CD8-positive, alpha-beta T cell (primary cell): ENCODE measurements at regions of chr1 and their contacts with region 1.

Region 1: DNA sequence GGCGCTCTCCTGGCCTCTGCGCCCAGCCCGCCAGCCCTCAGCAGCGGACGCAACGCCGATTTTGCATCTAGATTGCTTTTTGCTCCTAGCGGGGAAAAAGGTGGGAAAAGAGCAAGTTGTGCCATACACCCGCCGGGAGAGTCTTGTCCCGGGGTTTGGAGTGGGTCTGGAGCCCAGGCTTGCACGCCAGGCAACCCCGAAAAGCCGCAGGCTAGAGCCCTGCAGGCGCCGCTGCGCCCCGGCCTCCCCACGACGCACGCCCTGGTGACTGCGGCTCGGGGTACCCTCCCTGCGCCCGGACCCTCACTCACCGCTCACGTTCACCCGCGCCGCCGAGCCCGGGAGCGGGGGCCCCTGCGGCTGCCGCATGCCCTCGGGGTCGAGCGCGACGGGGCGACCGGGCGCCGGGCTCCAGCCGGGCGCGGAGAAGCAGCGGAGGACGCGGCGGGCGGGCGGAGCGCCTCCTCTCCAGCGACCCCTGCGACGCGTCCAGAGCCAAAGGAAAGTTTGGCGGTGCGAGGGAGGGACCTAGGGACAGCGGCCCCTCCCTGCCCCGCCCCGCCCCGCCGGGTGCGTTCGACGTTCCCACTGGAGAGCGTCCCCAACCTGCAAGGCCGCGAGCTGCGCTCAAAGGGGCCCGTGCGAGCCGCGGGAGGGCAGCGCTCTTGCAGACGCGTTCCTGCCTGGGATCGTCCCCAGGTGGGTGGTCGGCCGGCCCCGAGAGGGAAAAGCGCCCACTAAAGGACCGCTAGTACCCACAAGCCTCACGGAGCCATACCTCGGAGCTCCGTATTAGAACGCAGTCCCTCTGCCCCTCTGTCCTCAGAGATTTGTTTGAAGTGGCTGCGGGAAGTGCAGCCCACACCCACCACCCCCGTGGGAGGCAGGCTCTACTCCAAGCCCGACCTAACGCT is at the start of gene LPAR3:
- DNase-seq: peak in 4 of 9 experiments; percentile 39 to 55 (median 41)
- ATAC-seq: peak; percentile 49
- H3K4me3 ChIP-seq: peak within 1 kb of the TSS; percentile 39 to 56
- H3K4me3 Mint-ChIP-seq: peak within 1 kb of the TSS; percentile 79
- H3K27ac ChIP-seq: no peak within 1 kb of the TSS
- H3K27ac Mint-ChIP-seq: no peak within 1 kb of the TSS
- H3K4me1 ChIP-seq: peaks cover 12% of the 10 kb centered on the region
- H3K4me1 Mint-ChIP-seq: peaks cover 15% of the 10 kb centered on the region
- H3K27me3 ChIP-seq: peaks cover 5 to 8% of the 10 kb centered on the region in 2 experiments
- H3K27me3 Mint-ChIP-seq: peaks cover 33% of the 10 kb centered on the region
- CTCF ChIP-seq: no peak
- total RNA-seq, gene LPAR3: 0.58 to 0.90 TPM

Region 2: GRCh38 chr1:84795966-84796600 is 96.9 kb before region 1 on chr1:
- CTCF ChIA-PET with region 1: no interaction called
- POLR2A ChIA-PET with region 1: no interaction called
- intact Hi-C with region 1: no loop called
- DNase-seq: no peak
- ATAC-seq: no peak
- H3K4me3 ChIP-seq: no peak overlapping the region
- H3K4me3 Mint-ChIP-seq: no peak overlapping the region
- H3K27ac ChIP-seq: no peak overlapping the region
- H3K27ac Mint-ChIP-seq: no peak overlapping the region
- H3K4me1 ChIP-seq: no peaks in the 10 kb centered on the region
- H3K4me1 Mint-ChIP-seq: peaks cover 4% of the 10 kb centered on the region
- H3K27me3 ChIP-seq: no peaks in the 10 kb centered on the region
- H3K27me3 Mint-ChIP-seq: no peaks in the 10 kb centered on the region
- CTCF ChIP-seq: no peak

Region 3: DNA sequence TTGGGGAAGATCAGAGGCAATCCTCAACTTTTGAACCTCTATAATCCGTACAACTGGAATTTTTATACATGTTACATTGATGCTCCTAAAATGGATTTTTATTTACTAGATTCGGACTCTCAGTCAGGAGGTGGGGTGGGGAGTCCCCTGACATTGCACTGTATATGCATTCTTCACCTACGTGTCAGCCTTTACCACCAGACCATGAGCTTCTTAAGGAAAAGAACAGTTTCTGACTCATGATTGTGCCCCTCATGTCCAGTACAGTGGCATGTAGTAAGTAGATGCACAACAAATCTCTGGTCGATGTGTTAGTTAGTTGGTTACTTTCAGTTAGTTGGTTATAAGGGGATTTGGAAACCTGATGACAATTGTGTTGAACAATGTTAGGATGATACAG is 15.4 kb before region 1 on chr1:
- CTCF ChIA-PET with region 1: interaction called, 4 read pairs
- POLR2A ChIA-PET with region 1: no interaction called
- intact Hi-C with region 1: loop called in 1 of 2 experiments (anchors 2 kb)
- DNase-seq: no peak
- ATAC-seq: no peak
- H3K4me3 ChIP-seq: no peak overlapping the region
- H3K4me3 Mint-ChIP-seq: no peak overlapping the region
- H3K27ac ChIP-seq: no peak overlapping the region
- H3K27ac Mint-ChIP-seq: no peak overlapping the region
- H3K4me1 ChIP-seq: no peaks in the 10 kb centered on the region
- H3K4me1 Mint-ChIP-seq: peaks cover 12% of the 10 kb centered on the region
- H3K27me3 ChIP-seq: peaks cover 0 to 2% of the 10 kb centered on the region in 2 experiments
- H3K27me3 Mint-ChIP-seq: peaks cover 5% of the 10 kb centered on the region
- CTCF ChIP-seq: no peak